ENCODE measurements at regions of chr1 and their contacts with region 1.

Region 1: DNA sequence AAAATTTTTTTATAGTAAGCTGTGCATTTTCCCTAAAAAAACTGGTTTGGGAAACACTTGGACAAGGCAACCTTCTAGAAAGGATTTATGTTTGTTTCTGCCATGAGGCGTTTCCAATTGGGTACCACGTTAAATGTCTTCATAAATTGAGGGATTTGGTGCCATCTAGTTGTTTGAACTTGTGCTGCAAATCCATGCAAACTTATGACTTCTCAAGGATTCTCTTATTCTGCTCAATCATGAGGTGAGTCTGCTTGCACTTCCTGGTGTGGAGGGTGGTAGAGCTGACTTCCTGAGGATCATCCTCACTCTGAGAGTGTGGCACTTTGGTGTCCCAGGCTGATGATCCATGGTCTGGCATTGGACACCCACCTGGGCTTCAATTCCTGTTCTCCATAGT is 123.3 kb downstream of the PCNX2 start:
- DNase-seq: no peak
- ATAC-seq: peak; percentile 67

Region 2: DNA sequence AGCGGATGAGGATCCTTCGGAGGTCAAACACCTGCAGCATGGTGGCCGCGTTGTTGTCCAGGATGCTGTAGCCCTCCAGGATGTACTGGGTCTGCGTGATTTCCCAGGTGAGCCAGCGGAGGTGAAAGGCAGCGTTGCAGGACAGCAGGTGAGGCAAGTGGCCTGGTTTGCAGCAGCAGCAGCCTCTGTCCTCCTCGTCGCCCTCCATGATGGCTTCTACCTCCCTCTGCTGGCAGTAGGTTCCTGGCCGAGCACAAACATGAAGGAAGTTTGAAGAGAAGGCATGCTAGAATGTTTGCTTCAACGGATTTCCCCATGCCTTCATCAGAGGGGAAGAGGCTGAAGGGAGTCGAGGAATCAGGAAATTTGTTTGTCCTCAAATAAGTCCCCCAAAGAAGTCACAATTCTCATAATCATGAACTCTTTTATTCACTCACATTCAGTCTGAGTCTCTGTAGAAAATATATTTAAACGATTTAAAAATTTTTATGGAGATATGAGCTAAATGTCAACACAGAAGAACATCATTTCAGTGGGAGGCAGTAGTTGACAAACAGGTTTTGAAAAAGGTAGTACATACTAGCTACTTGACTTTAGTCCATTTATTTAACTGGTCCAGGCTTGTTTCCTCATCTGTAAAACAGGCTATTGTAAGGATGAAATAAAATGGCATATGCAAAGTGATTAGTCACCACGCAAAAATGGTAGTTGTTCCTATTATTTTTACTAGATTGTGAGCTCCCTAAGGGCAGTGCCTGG is 146.9 kb before region 1 on chr1:
- intact Hi-C with region 1: loop called (anchors 10 kb)
- DNase-seq: peak; percentile 55
- ATAC-seq: peak; percentile 71

Region 3: GRCh38 chr1:233132445-233132844 is 39.8 kb before region 1 on chr1:
- intact Hi-C with region 1: no loop called
- DNase-seq: no peak
- ATAC-seq: no peak

Measured in Right ventricle myocardium superior (tissue), 1 donor.